PC-9 (cell line): ENCODE measurements at regions of chr22 and their contacts with region 1.

Region 1: DNA sequence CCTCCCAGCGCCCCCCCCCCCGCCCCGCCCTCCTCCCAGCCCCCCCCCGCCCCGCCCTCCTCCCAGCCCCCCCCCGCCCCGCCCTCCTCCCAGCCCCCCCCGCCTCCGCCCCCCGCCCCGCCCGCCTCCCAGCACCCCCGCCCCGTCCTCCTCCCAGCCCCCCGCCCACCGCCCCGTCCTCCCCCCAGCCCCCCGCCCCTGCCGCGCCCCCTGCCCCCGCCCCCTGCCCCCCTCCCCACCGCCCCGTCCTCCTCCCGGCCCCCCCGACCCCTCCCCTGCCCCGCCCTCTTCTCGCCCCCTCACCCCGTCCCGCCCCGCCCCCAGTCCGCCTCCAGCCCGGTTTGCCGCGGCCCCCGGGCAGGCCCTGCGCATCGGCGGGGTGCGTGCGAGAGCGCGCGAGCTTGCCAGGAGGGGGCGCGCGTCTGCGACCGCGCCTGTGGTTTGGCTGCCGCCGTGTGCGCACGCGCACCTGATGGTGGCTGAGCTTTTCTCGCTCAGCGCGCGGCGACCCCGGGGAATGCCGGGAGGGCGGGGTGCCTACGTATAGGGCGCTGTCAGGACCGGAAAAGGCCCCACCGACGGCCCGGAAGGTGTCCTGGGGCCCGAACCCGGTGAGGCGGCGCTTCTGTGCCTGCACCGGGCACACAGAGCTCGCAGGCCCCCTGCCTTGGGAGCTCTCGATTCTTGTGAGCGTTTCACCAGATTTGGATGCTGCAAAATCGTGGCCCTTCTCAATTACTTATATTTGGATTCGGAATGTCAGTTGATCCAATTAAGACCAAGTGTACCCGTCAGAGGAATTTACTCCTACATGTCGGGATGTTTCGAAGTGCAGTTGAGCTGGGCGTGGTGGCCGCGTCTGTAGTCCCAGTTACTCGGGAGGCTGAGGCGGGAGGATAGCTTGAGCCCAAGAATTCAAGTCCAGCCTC is 501 bp upstream of the TTLL12 start:
- DNase-seq: peak; percentile 83 to 98
- H3K4me3 ChIP-seq: peak overlapping the region; percentile 94
- H3K27ac ChIP-seq: peak overlapping the region; percentile 76
- H3K4me1 ChIP-seq: peaks cover 37% of the 10 kb centered on the region
- H3K27me3 ChIP-seq: no peaks in the 10 kb centered on the region
- CTCF ChIP-seq: peak; percentile 60

Region 2: DNA sequence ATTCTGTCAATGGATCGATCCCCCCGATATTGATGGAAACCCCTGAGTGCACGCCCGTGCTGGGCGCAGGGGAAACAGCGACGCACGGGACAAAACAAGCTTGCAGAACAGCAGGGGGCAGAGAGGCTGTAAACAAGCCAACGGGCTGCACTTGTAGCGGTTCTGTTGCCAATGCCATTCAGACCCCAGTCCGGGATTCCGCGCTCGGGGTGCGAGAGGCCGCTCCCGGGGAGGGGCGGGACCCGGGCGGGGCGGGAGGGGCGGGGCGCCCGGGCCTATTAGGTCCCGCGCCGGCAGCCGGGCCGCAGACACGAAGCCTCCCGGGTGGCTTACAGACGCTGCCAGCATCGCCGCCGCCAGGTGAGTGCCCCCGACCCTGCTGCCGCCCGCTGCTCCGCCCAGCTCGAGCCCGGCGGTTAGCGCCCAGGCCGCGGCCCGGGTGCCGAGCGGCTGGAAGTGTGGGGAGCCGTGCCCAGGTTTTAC is 77.0 kb before region 1 on chr22 and contains the start of gene BIK:
- CTCF ChIA-PET with region 1: no interaction called
- POLR2A ChIA-PET with region 1: no interaction called
- intact Hi-C with region 1: no loop called
- DNase-seq: peak in 1 of 2 experiments; percentile 28
- H3K4me3 ChIP-seq: peak within 1 kb of the TSS; percentile 89
- H3K27ac ChIP-seq: no peak within 1 kb of the TSS
- H3K4me1 ChIP-seq: peaks cover 23% of the 10 kb centered on the region
- H3K27me3 ChIP-seq: peaks cover 4% of the 10 kb centered on the region; the same call in 1 of the 2 replicates
- CTCF ChIP-seq: 0 out of 2 replicates have a peak, but pooled peaks have one; percentile 22
- total RNA-seq, gene BIK: 10.6 and 14.5 TPM in 2 replicates

Region 3: DNA sequence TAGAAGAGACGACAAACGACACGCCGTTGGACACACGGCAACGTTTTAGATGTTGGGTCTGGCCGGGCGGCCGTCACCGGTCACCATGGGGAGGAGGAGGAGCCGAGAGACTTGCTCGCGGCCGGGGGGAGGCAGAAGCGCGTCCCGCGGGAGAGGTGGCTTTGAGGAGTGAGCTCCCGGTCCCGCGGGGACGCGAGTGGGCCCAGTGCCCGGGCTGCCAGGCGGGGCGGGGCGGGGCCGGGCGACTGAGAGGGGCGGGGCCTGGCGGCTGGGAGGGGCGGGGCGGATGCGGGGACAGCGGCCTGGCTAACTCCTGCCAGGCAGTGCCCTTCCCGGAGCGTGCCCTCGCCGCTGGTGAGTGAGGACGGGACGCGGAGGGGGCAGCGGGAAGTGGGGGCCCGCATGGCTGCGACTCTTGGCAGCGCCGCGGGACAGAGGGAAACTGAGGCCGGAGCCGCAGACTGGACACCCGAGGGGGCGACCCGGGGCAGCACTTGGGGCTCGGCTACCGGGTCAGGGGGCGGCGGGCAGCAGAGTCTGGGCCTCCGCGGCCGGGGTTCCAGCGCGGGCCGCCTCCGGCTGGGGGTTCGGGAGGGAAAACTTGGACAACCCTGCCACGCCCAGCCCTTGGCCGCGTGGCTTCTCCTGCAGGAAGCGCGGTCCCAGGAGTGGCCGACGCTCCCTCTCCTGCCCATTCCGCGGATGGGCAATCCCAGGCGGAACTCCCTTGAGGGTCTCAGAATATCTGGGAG is 36.0 kb before region 1 on chr22 and contains the start of gene TSPO:
- CTCF ChIA-PET with region 1: no interaction called
- POLR2A ChIA-PET with region 1: interaction called, 3 read pairs
- intact Hi-C with region 1: loop called (anchors 5 kb)
- DNase-seq: peak; percentile 34 to 60
- H3K4me3 ChIP-seq: peak within 1 kb of the TSS; percentile 88
- H3K27ac ChIP-seq: peak within 1 kb of the TSS; percentile 45; the same call in 1 of the 2 replicates
- H3K4me1 ChIP-seq: peaks cover 20% of the 10 kb centered on the region
- H3K27me3 ChIP-seq: no peaks in the 10 kb centered on the region
- CTCF ChIP-seq: no peak
- total RNA-seq, gene TSPO: 243 and 308 TPM in 2 replicates

Region 4: DNA sequence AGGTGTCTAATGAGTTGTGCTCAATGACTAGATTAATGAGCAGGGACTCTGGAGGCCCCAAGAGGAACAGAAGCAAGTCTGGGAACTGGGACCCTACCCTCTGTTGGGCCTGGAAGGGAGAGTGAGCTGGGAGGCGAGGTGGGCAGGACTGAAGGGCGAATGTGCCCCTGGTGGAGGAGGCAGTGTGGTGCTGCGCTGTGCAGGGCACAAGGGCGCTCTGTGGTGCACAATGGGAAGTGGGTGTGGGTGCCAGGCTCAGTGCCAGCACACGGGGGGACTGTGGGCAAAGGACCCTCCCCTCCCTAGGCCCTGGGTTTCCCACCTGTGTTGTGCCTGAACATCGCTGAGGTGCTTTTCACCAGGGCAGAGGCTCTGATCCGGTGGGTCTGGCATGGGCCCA is 57.0 kb after region 1 on chr22:
- CTCF ChIA-PET with region 1: no interaction called
- POLR2A ChIA-PET with region 1: no interaction called
- intact Hi-C with region 1: no loop called
- DNase-seq: no peak
- H3K4me3 ChIP-seq: no peak overlapping the region
- H3K27ac ChIP-seq: no peak overlapping the region
- H3K4me1 ChIP-seq: no peaks in the 10 kb centered on the region
- H3K27me3 ChIP-seq: peaks cover 28% of the 10 kb centered on the region
- CTCF ChIP-seq: no peak